HepG2 (cell line): ENCODE measurements at regions of chrX and their contacts with region 1.

Region 1: DNA sequence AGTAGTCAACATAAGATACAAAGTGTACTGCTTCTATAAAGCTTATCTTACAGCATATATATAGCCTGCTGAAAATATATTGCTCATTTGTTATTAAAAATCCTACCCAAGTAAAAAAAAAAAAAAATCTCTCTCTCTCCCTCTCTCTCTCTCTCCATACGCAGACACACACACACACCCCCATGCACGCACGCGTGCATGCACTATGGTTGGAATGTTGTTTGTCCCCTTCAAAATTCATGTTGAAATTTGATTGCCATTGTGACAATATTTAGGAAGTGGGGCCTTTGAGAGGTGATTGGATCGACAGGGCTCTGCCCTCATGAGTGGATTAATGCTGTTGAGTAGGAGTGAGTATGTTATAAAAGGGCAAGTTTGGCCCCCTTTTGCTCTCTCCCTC is 70.2 kb upstream of the EOLA2 start:
- DNase-seq: no peak
- ATAC-seq: no peak
- H3K4me3 ChIP-seq: no peak overlapping the region
- H3K27ac ChIP-seq: no peak overlapping the region
- H3K4me1 ChIP-seq: peaks cover 6% of the 10 kb centered on the region; the same call in 1 of the 2 replicates
- H3K27me3 ChIP-seq: no peaks in the 10 kb centered on the region
- CTCF ChIP-seq: no peak
- EP300 ChIP-seq: no peak
- POLR2A ChIP-seq: no peak
- RAD21 ChIP-seq: no peak

Region 2: GRCh38 chrX:149992918-149993317 is 15.6 kb before region 1 on chrX:
- CTCF ChIA-PET with region 1: no interaction called
- POLR2A ChIA-PET with region 1: no interaction called
- in situ Hi-C with region 1: no loop called
- intact Hi-C with region 1: loop called (anchors 1 kb)
- DNase-seq: no peak
- ATAC-seq: no peak
- H3K4me3 ChIP-seq: no peak overlapping the region
- H3K27ac ChIP-seq: no peak overlapping the region
- H3K4me1 ChIP-seq: no peaks in the 10 kb centered on the region
- H3K27me3 ChIP-seq: no peaks in the 10 kb centered on the region
- CTCF ChIP-seq: no peak
- EP300 ChIP-seq: no peak
- POLR2A ChIP-seq: no peak
- RAD21 ChIP-seq: no peak

Region 3: GRCh38 chrX:150032741-150033140 is 24.2 kb after region 1 on chrX:
- CTCF ChIA-PET with region 1: no interaction called
- POLR2A ChIA-PET with region 1: no interaction called
- in situ Hi-C with region 1: no loop called
- intact Hi-C with region 1: no loop called
- DNase-seq: no peak
- ATAC-seq: no peak
- H3K4me3 ChIP-seq: no peak overlapping the region
- H3K27ac ChIP-seq: no peak overlapping the region
- H3K4me1 ChIP-seq: peaks cover 26% of the 10 kb centered on the region
- H3K27me3 ChIP-seq: no peaks in the 10 kb centered on the region
- CTCF ChIP-seq: no peak
- EP300 ChIP-seq: no peak
- POLR2A ChIP-seq: no peak
- RAD21 ChIP-seq: no peak

Region 4: DNA sequence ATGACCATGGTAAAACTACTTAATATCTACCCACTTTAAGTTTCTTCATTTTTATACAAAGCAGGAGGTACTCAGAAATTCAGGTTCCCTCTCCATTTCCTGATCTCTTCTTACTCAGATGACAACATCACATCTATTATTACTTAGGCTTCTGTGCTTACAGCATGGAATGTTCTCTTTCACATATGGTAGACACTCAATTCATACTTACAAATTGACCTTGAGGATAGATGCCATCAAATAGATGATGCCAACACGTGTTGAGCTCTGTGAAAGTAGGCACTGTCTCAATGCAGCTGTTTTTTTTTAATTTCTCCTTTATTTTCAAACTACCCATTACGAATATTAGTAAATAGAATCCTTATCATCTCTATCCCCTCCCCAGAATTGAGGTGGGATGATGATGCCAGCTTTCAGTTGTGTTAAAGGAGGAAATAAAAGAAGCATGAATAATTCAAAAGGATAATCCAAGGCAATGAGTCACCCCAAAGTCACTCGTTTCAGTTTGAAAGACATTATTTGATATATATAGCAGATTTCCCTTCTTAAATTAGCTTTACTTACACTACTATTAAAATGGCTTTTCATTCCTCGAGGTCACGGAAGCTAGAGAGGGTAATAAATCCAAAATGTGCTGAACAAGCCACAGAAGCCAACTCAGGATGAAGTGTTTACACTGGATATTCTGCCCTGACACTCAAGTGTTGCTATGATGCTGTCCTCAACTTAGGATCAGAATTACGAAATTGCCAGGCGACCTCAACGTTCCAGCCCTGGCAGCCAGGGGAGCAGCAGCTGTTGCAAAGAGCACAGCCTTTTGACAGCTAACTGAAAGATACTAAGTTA is 54.0 kb after region 1 on chrX:
- CTCF ChIA-PET with region 1: no interaction called
- POLR2A ChIA-PET with region 1: no interaction called
- in situ Hi-C with region 1: no loop called
- intact Hi-C with region 1: no loop called
- DNase-seq: no peak
- ATAC-seq: no peak
- H3K4me3 ChIP-seq: no peak overlapping the region
- H3K27ac ChIP-seq: no peak overlapping the region
- H3K4me1 ChIP-seq: no peaks in the 10 kb centered on the region
- H3K27me3 ChIP-seq: no peaks in the 10 kb centered on the region
- CTCF ChIP-seq: no peak
- EP300 ChIP-seq: no peak
- POLR2A ChIP-seq: no peak
- RAD21 ChIP-seq: no peak

Region 5: GRCh38 chrX:150165776-150166610 is 157.5 kb after region 1 on chrX:
- CTCF ChIA-PET with region 1: no interaction called
- POLR2A ChIA-PET with region 1: no interaction called
- in situ Hi-C with region 1: no loop called
- intact Hi-C with region 1: no loop called
- DNase-seq: no peak
- ATAC-seq: no peak
- H3K4me3 ChIP-seq: no peak overlapping the region
- H3K27ac ChIP-seq: no peak overlapping the region
- H3K4me1 ChIP-seq: no peaks in the 10 kb centered on the region
- H3K27me3 ChIP-seq: no peaks in the 10 kb centered on the region
- CTCF ChIP-seq: no peak
- EP300 ChIP-seq: no peak
- POLR2A ChIP-seq: no peak
- RAD21 ChIP-seq: no peak

Region 6: DNA sequence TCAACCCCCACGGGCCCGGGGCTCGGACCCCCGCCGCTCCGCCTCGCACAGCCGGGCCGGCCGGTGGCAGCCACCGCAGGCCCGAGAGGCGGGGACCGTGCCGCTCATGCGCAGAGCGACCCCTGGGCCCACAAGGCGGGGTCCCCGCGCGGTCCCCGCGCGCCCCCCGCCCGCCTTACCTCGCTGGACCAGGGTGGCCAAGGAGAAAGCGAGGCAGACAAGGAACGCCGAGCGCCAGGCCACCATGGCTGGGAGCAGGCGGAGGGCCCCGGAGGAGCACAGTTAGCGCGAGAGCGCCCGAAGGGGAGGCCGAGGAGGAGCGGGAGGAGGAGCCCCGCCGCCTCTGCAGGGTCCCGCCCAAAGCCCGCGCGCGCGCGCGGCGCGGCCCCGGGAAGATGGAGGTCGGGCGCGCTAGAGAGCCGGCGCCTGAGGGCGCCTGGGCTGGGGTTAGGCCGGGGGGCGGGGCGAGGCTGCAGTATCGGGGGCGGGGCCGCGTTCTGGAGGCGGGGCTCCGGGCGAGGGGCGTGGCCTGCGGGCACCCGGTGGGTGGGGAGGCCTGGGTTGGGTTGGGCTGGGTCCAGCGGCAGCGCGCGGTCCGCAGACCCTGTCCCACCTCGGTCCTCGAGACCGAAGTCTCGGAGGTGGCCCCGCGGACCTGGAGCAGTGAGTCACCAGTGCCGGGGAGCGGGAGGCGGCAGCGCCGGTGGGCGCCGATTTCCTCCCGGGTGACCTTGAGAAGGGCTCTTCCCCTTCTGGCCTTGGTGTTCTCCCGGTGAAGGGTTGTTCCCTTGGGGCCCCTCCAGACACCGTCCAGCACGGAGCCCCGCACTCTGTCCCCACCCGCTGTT is 890.0 kb after region 1 on chrX and contains the start of gene CD99L2:
- CTCF ChIA-PET with region 1: no interaction called
- POLR2A ChIA-PET with region 1: no interaction called
- in situ Hi-C with region 1: no loop called
- intact Hi-C with region 1: no loop called
- DNase-seq: peak; percentile 52
- ATAC-seq: peak; percentile 92
- H3K4me3 ChIP-seq: peak within 1 kb of the TSS; percentile 45 to 75 (median 69); a peak in 5 of 6 replicates
- H3K27ac ChIP-seq: no peak within 1 kb of the TSS
- H3K4me1 ChIP-seq: peaks cover 8% of the 10 kb centered on the region; the same call in 1 of the 2 replicates
- H3K27me3 ChIP-seq: peaks cover 2 to 5% of the 10 kb centered on the region in 2 experiments; a peak in 3 of 5 replicates
- CTCF ChIP-seq: 0 out of 2 replicates have a peak, but pooled peaks have one; percentile 13
- EP300 ChIP-seq: no peak
- POLR2A ChIP-seq: peak; percentile 48 to 58; a peak in 3 of 4 replicates
- RAD21 ChIP-seq: no peak
- total RNA-seq, gene CD99L2: 2.8 and 7.6 TPM in 2 replicates